Sigmoid colon (tissue), 7 donors: ENCODE measurements at regions of chr15 and their contacts with region 1.

Region 1: DNA sequence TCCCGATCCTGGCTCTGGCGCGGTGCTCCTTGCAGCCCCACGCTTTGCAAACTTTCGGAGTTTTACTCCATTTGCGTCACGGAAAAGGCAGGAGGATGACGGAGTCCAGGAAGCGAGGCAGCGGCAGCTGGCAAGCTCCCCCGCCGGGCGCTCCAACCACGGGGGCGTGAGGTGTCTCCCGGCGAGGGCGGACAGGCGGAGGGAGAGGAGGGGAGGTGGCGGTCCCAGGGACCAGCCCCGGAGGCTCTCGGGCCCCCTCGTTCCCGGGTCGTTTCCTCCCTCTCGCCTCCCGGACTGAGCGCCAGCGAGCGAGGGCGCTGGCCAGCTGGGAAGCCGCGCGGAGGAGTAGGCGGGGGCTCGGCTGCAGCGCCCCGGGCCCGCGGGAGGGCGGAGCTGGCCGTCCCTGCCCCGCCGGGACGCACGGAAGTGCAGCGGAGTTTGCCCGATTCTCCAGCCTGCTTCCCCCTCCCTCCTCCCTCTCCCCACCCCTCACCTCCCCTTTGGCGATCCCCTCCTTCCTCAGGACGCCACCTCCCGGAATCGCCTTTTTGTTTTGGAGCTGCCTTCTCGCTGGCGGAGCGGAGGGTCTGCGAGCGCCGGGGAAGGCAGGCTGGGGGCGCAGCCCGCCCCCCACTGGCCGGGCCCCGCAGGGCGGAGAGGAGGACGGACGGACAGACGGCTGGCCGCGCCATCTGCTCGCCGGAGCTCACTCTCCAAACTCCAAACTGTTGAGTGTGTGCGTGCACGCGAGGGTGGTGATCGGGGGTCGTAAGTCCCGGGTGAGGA is at the start of gene SNX33:
- DNase-seq: peak; percentile 94
- H3K4me3 ChIP-seq: peak within 1 kb of the TSS; percentile 77 to 87 (median 78)
- H3K27ac ChIP-seq: peak within 1 kb of the TSS; percentile 94 to 98 (median 97)
- H3K4me1 ChIP-seq: peaks cover 0 to 53% (median 50%) of the 10 kb centered on the region in 4 donors
- H3K27me3 ChIP-seq: no peaks in the 10 kb centered on the region
- CTCF ChIP-seq: peak; percentile 38 to 63 (median 52)
- EP300 ChIP-seq: peak in 1 of 4 donors; percentile 61
- POLR2A ChIP-seq: peak; percentile 11 to 33
- total RNA-seq, gene SNX33: 20.1 to 32.7 (median 25.8) TPM

Region 2: GRCh38 chr15:75597667-75598341 is 49.8 kb before region 1 on chr15:
- intact Hi-C with region 1: no loop called
- DNase-seq: no peak
- H3K4me3 ChIP-seq: no peak overlapping the region
- H3K27ac ChIP-seq: no peak overlapping the region
- H3K4me1 ChIP-seq: peaks cover 0 to 7% (median 3%) of the 10 kb centered on the region in 4 donors
- H3K27me3 ChIP-seq: no peaks in the 10 kb centered on the region
- CTCF ChIP-seq: peak in 1 of 4 experiments; percentile 23
- EP300 ChIP-seq: no peak
- POLR2A ChIP-seq: no peak

Region 3: GRCh38 chr15:75738647-75739331 is 91.2 kb after region 1 on chr15:
- intact Hi-C with region 1: loop called (anchors 5 kb)
- DNase-seq: peak; percentile 98
- H3K4me3 ChIP-seq: peak overlapping the region; percentile 70 to 86 (median 82)
- H3K27ac ChIP-seq: peak overlapping the region; percentile 63 to 87 (median 82)
- H3K4me1 ChIP-seq: peaks cover 0 to 41% (median 27%) of the 10 kb centered on the region in 4 donors
- H3K27me3 ChIP-seq: no peaks in the 10 kb centered on the region
- CTCF ChIP-seq: no peak
- EP300 ChIP-seq: peak in 1 of 4 donors; percentile 49
- POLR2A ChIP-seq: no peak